ENCODE measurements at regions of chr10 and their contacts with region 1.

Region 1: GRCh38 chr10:31728698-31729224 is 199.9 kb downstream of the ARHGAP12 start:
- DNase-seq: no peak
- ATAC-seq: no peak
- H3K4me3 ChIP-seq: no peak overlapping the region
- H3K27ac ChIP-seq: no peak overlapping the region
- H3K4me1 ChIP-seq: no peaks in the 10 kb centered on the region
- H3K27me3 ChIP-seq: no peaks in the 10 kb centered on the region
- CTCF ChIP-seq: no peak
- EP300 ChIP-seq: no peak
- POLR2A ChIP-seq: no peak
- RAD21 ChIP-seq: no peak

Region 2: GRCh38 chr10:31739711-31740110 is 10.9 kb after region 1 on chr10:
- CTCF ChIA-PET with region 1: no interaction called
- POLR2A ChIA-PET with region 1: interaction called, 3 read pairs
- RAD21 ChIA-PET with region 1: interaction called, 3 read pairs
- SMC1A ChIA-PET with region 1: interaction called, 11 read pairs
- in situ Hi-C with region 1: no loop called
- intact Hi-C with region 1: no loop called
- DNase-seq: no peak
- ATAC-seq: no peak
- H3K4me3 ChIP-seq: no peak overlapping the region
- H3K27ac ChIP-seq: no peak overlapping the region
- H3K4me1 ChIP-seq: no peaks in the 10 kb centered on the region
- H3K27me3 ChIP-seq: no peaks in the 10 kb centered on the region
- CTCF ChIP-seq: no peak
- EP300 ChIP-seq: no peak
- POLR2A ChIP-seq: no peak
- RAD21 ChIP-seq: no peak

Measured in GM12878 (cell line).